Adrenal gland (tissue), 19 donors: ENCODE measurements at regions of chr15 and their contacts with region 1.

Region 1: GRCh38 chr15:31263751-31264558 is 62.7 kb upstream of the KLF13 start:
- DNase-seq: peak; percentile 45 to 85 (median 67)
- H3K4me3 ChIP-seq: no peak overlapping the region
- H3K27ac ChIP-seq: peak overlapping the region in 4 of 5 donors; percentile 24 to 89 (median 67)
- H3K4me1 ChIP-seq: peaks cover 6 to 32% of the 10 kb centered on the region in 2 donors
- H3K27me3 ChIP-seq: no peaks in the 10 kb centered on the region
- CTCF ChIP-seq: no peak
- POLR2A ChIP-seq: no peak

Region 2: GRCh38 chr15:31215490-31216214 is 48.3 kb before region 1 on chr15:
- intact Hi-C with region 1: loop called in 1 of 2 experiments (anchors 5 kb)
- DNase-seq: peak; percentile 71 to 83 (median 77)
- H3K4me3 ChIP-seq: peak overlapping the region in 2 of 4 donors; percentile 20 to 71
- H3K27ac ChIP-seq: peak overlapping the region; percentile 26 to 90 (median 82)
- H3K4me1 ChIP-seq: peaks cover 0 to 15% of the 10 kb centered on the region in 2 donors
- H3K27me3 ChIP-seq: no peaks in the 10 kb centered on the region
- CTCF ChIP-seq: peak; percentile 68 to 92 (median 82)
- POLR2A ChIP-seq: peak in 1 of 2 donors; percentile 59